ENCODE measurements at regions of chr11 and their contacts with region 1.

Region 1: DNA sequence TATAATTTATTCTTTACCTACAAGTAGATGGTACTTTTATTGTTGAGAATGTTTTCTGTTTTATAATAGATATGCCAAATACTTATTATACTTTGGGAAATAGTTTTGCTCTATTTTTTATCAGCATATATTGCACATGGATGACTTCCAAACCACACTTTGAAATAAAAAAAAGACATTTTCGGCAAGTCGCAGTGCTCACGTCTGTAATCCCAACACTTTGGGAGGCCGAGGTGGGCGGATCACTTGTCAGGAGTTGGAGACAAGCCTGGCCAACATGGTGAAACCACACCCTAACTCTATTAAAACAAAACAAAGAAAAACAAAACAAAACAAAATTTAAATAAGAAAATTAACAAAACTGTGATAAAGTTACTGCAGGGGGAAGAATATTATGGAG is 983.9 kb upstream of the CNTN5 start:
- DNase-seq: no peak
- H3K4me3 ChIP-seq: no peak overlapping the region
- H3K27ac ChIP-seq: no peak overlapping the region
- H3K4me1 ChIP-seq: no peaks in the 10 kb centered on the region
- H3K27me3 ChIP-seq: no peaks in the 10 kb centered on the region
- CTCF ChIP-seq: no peak
- EP300 ChIP-seq: no peak
- POLR2A ChIP-seq: no peak

Region 2: DNA sequence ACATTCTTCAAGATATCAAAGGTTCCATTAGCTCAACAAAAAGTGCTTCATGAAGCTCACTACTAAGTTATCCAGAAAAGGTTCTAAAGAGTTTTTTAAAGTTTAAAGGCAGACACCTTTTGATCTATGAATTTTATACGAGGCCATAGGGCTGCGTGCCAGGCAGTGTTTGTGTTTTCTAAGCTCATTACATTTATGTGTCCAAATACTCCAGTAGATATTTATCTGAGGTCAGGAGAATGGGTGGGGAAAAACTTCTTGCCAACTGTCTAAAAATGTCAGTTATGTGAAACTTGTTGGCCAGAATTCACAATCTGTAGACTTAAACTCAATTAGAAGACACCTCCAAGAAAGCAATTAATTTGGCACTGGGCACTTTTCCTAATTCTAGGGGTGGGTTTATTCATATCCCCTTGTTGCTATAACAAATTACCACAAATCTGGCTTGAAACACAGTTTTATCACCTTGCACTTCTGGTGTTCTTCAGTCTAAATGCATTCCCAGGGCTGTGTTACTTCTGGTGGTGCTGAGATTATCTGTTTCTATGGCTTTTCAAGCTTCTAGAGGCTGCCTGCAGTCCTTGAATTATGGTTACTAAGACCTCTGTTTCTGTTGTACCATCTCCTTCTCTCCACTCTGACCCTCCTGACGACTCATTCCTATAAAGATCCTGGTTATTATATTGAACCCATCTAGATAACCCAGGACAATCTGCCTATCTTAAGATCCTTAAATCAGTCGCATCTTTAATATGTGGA is 46.5 kb before region 1 on chr11:
- in situ Hi-C with region 1: no loop called
- intact Hi-C with region 1: no loop called
- DNase-seq: no peak
- H3K4me3 ChIP-seq: no peak overlapping the region
- H3K27ac ChIP-seq: no peak overlapping the region
- H3K4me1 ChIP-seq: no peaks in the 10 kb centered on the region
- H3K27me3 ChIP-seq: no peaks in the 10 kb centered on the region
- CTCF ChIP-seq: no peak
- EP300 ChIP-seq: no peak
- POLR2A ChIP-seq: no peak

Region 3: DNA sequence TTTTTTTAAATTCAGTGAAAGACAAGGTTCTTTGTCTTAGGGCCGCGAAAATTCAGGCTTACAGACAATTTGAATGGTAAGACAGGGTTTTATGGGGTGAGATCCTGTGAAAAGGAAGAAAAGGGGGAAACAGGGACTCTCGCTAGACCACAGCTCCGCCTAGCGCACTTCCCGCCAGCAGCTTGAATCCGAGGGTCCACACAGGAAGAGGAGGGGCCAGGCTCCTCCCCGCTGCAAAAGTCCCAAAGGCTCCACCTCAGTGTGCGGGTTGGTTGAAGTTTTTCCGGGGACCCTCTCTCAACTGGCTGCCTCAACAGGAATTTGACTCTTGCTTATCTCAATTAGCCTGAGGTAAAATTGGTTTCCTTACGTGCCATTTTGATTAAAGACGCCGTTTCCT is 33.1 kb after region 1 on chr11:
- in situ Hi-C with region 1: no loop called
- intact Hi-C with region 1: no loop called
- DNase-seq: no peak
- H3K4me3 ChIP-seq: no peak overlapping the region
- H3K27ac ChIP-seq: no peak overlapping the region
- H3K4me1 ChIP-seq: no peaks in the 10 kb centered on the region
- H3K27me3 ChIP-seq: no peaks in the 10 kb centered on the region
- CTCF ChIP-seq: no peak
- EP300 ChIP-seq: no peak
- POLR2A ChIP-seq: no peak

Region 4: DNA sequence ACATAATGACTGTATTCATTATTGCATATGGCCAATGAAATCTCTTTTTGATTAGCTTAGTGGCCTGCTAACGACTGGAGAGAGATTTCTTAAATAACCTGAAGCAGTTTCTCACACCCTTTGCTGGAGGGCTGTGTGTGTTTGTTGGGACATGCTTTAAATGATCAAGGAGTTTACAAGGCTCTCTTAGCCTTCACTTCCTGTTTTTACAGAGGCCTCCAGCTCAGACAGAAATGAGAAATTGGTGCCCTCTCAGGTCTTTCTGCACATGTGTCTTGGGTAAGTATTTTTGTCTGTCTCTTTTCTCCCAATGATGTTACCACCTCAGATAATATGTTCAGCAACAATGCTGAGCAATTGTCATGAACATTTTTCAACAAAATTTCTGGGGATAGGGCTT is 99.5 kb after region 1 on chr11:
- in situ Hi-C with region 1: loop called in 1 of 4 experiments (anchors 25 kb)
- intact Hi-C with region 1: no loop called
- DNase-seq: no peak
- H3K4me3 ChIP-seq: no peak overlapping the region
- H3K27ac ChIP-seq: no peak overlapping the region
- H3K4me1 ChIP-seq: no peaks in the 10 kb centered on the region
- H3K27me3 ChIP-seq: no peaks in the 10 kb centered on the region
- CTCF ChIP-seq: no peak
- EP300 ChIP-seq: no peak
- POLR2A ChIP-seq: no peak

Measured in transverse colon (tissue), 4 donors.